Activated B cell treated with CpG ODN at 0.5 μM for 24 hours (primary cell): ENCODE measurements at regions of chr5 and their contacts with region 1.

Region 1: GRCh38 chr5:56434986-56435385 is 201.9 kb upstream of the ANKRD55 start:
- DNase-seq: no peak
- ATAC-seq: no peak
- H3K4me3 Mint-ChIP-seq: no peak overlapping the region
- H3K27ac Mint-ChIP-seq: no peak overlapping the region
- H3K4me1 Mint-ChIP-seq: peaks cover 6% of the 10 kb centered on the region
- H3K27me3 Mint-ChIP-seq: no peaks in the 10 kb centered on the region
- CTCF ChIP-seq: no peak

Region 2: GRCh38 chr5:56451742-56452141 is 16.8 kb after region 1 on chr5:
- CTCF ChIA-PET with region 1: no interaction called
- POLR2A ChIA-PET with region 1: no interaction called
- intact Hi-C with region 1: loop called (anchors 2 kb)
- DNase-seq: no peak
- ATAC-seq: no peak
- H3K4me3 Mint-ChIP-seq: no peak overlapping the region
- H3K27ac Mint-ChIP-seq: no peak overlapping the region
- H3K4me1 Mint-ChIP-seq: peaks cover 21% of the 10 kb centered on the region
- H3K27me3 Mint-ChIP-seq: no peaks in the 10 kb centered on the region
- CTCF ChIP-seq: no peak